ENCODE measurements at regions of chr11 and their contacts with region 1.

Region 1: GRCh38 chr11:74570266-74571061 is 21.9 kb upstream of the POLD3 start:
- DNase-seq: peak; percentile 79
- H3K27ac ChIP-seq: no peak overlapping the region
- CTCF ChIP-seq: peak; percentile 76

Region 2: DNA sequence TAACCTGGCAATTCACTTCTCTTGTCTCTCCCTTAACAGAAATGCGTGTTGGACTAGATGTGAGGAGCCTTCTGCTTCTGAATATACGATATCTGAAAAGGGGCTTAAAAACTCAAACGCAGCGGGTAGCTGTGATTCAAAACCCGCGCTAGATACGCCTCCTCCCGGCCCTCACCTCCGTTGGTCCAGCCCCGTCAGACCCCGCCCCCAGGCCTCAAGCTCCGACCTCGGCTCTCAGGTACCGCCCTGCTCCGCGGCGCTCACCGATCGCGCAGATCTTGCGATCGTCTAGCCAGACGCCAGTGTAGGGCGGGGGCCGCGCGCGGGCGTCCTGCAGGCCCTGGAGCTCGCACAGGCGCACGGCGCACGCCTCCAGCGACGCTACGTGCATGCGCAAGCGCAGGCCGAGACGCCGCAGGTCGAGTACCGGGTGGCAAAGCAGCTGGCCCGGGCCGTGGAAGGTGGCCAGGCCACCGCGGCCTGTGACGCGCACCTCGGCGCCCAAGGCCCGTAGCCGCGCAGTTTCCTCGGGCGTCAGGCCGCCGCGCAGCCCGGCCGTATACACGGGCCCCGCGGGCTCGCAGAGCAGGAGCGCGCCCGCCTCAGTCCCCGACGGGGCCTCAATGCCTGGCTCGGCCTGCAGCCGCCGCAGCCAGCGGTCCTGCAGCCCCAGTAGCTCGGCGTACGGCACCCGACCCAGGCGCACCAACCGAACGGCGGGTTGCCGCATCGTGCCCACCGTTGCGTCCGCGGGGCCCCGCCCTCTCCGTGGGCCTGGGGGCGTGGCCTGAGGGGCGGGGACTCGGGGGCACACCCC is 77.3 kb before region 1 on chr11 and contains the start of gene LIPT2:
- CTCF ChIA-PET with region 1: interaction called, 10 read pairs
- POLR2A ChIA-PET with region 1: interaction called, 5 read pairs
- DNase-seq: peak; percentile 92
- H3K27ac ChIP-seq: peak within 1 kb of the TSS; percentile 99
- CTCF ChIP-seq: no peak

Measured in RWPE1 (cell line).